Heart right ventricle (tissue), 16 donors: ENCODE measurements at regions of chr18 and their contacts with region 1.

Region 1: GRCh38 chr18:31156821-31157777 is 5.6 kb downstream of the DSC1 start:
- DNase-seq: no peak
- ATAC-seq: no peak
- H3K4me3 ChIP-seq: no peak overlapping the region
- H3K27ac ChIP-seq: no peak overlapping the region
- H3K4me1 ChIP-seq: peaks cover 0 to 5% (median 0%) of the 10 kb centered on the region in 9 donors
- H3K27me3 ChIP-seq: no peaks in the 10 kb centered on the region
- CTCF ChIP-seq: no peak

Region 2: GRCh38 chr18:31217038-31217849 is 60.1 kb after region 1 on chr18:
- intact Hi-C with region 1: loop called in 1 of 10 experiments (anchors 10 kb)
- DNase-seq: no peak
- ATAC-seq: no peak
- H3K4me3 ChIP-seq: no peak overlapping the region
- H3K27ac ChIP-seq: no peak overlapping the region
- H3K4me1 ChIP-seq: peaks cover 0 to 6% (median 0%) of the 10 kb centered on the region in 9 donors
- H3K27me3 ChIP-seq: no peaks in the 10 kb centered on the region
- CTCF ChIP-seq: no peak

Region 3: DNA sequence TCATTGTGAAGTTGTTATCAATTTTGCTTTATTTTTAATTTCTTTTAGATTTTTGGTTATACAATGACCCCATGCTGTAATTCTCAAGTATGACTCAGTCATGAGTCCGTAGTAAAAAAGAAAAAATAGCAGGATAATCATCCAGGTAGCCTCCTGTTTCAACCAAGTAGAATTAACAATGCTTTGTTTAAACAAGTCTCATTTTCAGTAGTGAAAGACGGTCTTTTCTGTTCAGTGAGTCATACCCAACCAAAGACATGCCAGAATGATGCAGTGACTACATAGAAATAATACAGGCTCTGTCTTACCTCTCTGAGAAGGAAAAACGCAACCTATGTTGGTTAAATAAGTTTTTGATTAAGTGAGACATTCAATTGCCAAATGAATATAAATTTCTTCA is 73.4 kb after region 1 on chr18:
- intact Hi-C with region 1: no loop called
- DNase-seq: no peak
- ATAC-seq: no peak
- H3K4me3 ChIP-seq: no peak overlapping the region
- H3K27ac ChIP-seq: no peak overlapping the region
- H3K4me1 ChIP-seq: peaks cover 0 to 35% (median 4%) of the 10 kb centered on the region in 9 donors
- H3K27me3 ChIP-seq: no peaks in the 10 kb centered on the region
- CTCF ChIP-seq: no peak